ENCODE measurements at regions of chr12 and their contacts with region 1.

Region 1: GRCh38 chr12:117874842-117875434 is 93.9 kb downstream of the KSR2 start:
- DNase-seq: peak; percentile 34
- H3K4me3 Mint-ChIP-seq: no peak overlapping the region
- H3K27ac Mint-ChIP-seq: no peak overlapping the region
- H3K4me1 Mint-ChIP-seq: peaks cover 12% of the 10 kb centered on the region
- H3K27me3 Mint-ChIP-seq: peaks cover 27% of the 10 kb centered on the region

Region 2: GRCh38 chr12:118035246-118036041 is 160.5 kb after region 1 on chr12:
- intact Hi-C with region 1: loop called (anchors 1 kb)
- DNase-seq: no peak
- H3K4me3 Mint-ChIP-seq: peak overlapping the region; percentile 57
- H3K27ac Mint-ChIP-seq: peak overlapping the region; percentile 99
- H3K4me1 Mint-ChIP-seq: peaks cover 46% of the 10 kb centered on the region
- H3K27me3 Mint-ChIP-seq: no peaks in the 10 kb centered on the region

Region 3: GRCh38 chr12:118055144-118055557 is 180.2 kb after region 1 on chr12:
- intact Hi-C with region 1: loop called (anchors 1 kb)
- DNase-seq: peak; percentile 55
- H3K4me3 Mint-ChIP-seq: peak overlapping the region; percentile 60
- H3K27ac Mint-ChIP-seq: peak overlapping the region; percentile 50
- H3K4me1 Mint-ChIP-seq: peaks cover 61% of the 10 kb centered on the region
- H3K27me3 Mint-ChIP-seq: no peaks in the 10 kb centered on the region

Region 4: DNA sequence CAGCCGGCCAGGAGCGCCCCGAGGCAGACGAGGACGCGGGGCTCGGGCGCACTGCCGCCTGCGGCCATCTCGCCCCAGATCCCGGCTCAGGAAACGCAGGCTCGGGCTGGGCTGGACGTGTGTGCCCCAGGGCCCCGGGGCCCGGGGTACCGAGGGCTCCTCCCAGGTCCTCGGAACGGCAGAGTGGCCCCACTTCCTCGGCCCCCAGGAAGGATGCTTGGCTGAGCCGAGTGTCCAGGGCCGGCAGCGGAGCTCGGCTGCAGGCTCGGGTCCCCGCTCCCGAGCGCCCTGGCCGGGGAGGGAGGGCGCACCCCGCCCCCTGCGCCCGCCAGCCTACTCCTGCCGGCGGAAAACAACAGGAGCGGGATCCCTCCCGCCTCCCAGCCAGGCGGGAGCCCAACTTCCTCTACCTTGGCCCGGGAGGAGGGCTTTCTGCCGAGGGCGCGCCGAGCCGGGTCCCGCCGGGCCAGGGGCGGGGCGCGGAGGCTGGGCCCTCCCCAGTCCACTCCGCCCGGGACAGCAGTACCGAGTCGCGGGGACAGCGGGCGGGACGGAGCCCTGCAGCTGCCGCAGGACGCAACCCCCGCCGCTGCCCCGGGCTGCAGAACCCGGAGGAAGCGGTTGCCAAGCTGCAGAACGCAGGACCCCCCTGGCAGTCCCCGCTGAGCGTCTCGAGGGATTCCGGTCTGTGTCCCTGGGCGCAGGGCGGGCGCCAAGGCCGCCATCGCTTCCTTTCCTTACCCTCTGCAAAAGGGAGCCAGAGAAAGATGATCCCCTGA is 228.9 kb after region 1 on chr12 and contains the start of gene VSIG10:
- intact Hi-C with region 1: loop called (anchors 2 kb)
- DNase-seq: peak; percentile 16
- H3K4me3 Mint-ChIP-seq: peak within 1 kb of the TSS; percentile 95
- H3K27ac Mint-ChIP-seq: peak within 1 kb of the TSS; percentile 44
- H3K4me1 Mint-ChIP-seq: peaks cover 10% of the 10 kb centered on the region
- H3K27me3 Mint-ChIP-seq: peaks cover 29% of the 10 kb centered on the region
- total RNA-seq, gene VSIG10: 15.1 and 16.0 TPM in 2 replicates

Region 5: GRCh38 chr12:118120579-118121363 is 245.8 kb after region 1 on chr12:
- intact Hi-C with region 1: loop called (anchors 5 kb)
- DNase-seq: peak; percentile 28
- H3K4me3 Mint-ChIP-seq: no peak overlapping the region
- H3K27ac Mint-ChIP-seq: no peak overlapping the region
- H3K4me1 Mint-ChIP-seq: peaks cover 14% of the 10 kb centered on the region
- H3K27me3 Mint-ChIP-seq: peaks cover 2% of the 10 kb centered on the region

Region 6: DNA sequence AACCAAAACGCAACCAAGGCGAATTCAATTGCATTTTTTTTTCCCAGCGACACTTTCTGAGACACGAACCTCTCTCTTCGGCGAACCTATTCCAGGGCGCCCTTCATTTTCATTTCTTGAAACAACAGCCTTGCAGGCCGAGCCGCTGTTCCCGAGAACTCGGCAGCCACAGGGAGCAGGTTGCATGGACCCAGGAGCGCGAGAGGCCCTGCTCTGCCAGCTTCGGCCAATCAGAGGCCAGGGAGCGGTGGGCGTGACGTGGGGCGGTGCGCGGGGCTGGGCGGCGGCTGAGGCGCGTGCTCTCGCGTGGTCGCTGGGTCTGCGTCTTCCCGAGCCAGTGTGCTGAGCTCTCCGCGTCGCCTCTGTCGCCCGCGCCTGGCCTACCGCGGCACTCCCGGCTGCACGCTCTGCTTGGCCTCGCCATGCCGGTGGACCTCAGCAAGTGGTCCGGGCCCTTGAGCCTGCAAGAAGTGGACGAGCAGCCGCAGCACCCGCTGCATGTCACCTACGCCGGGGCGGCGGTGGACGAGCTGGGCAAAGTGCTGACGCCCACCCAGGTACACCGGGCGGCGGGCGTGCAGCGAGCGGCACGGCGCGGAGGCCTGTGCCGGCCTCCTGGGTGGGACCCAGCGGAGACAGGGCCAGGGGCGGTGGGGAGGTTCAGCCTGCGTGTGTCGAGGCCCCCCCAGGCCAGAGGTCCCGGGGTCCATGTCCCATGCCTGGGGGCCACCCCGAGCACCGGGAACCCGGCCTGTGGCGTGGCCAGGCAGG is 261.0 kb after region 1 on chr12 and contains the start of gene PEBP1:
- intact Hi-C with region 1: loop called (anchors 2 kb)
- DNase-seq: peak; percentile 93
- H3K4me3 Mint-ChIP-seq: peak within 1 kb of the TSS; percentile 95
- H3K27ac Mint-ChIP-seq: peak within 1 kb of the TSS; percentile 89
- H3K4me1 Mint-ChIP-seq: peaks cover 18% of the 10 kb centered on the region
- H3K27me3 Mint-ChIP-seq: no peaks in the 10 kb centered on the region
- total RNA-seq, gene PEBP1: 200 and 205 TPM in 2 replicates

Region 7: GRCh38 chr12:118183705-118184104 is 308.8 kb after region 1 on chr12:
- intact Hi-C with region 1: loop called (anchors 5 kb)
- DNase-seq: no peak
- H3K4me3 Mint-ChIP-seq: no peak overlapping the region
- H3K27ac Mint-ChIP-seq: no peak overlapping the region
- H3K4me1 Mint-ChIP-seq: peaks cover 9% of the 10 kb centered on the region
- H3K27me3 Mint-ChIP-seq: no peaks in the 10 kb centered on the region

Measured in activated T-helper 1 cell treated with anti-CD3 and anti-CD28 coated beads, Interleukin-12 subunit alpha, Interleukin-12 subunit beta, Interleukin-2, Interleukin-4 antibody, amounts not matched to agents 30 ng/mL and 10 ng/mL and 1 ng/mL, durations not matched to agents 14 hours and 24 hours and 36 hours (primary cell).